ENCODE measurements at regions of chr12 and their contacts with region 1.

Region 1: GRCh38 chr12:121499929-121500793 is 80.7 kb downstream of the KDM2B start:
- DNase-seq: peak; percentile 75 to 85
- H3K4me3 ChIP-seq: peak overlapping the region; percentile 37 to 50
- H3K27ac ChIP-seq: peak overlapping the region; percentile 71 to 80
- H3K4me1 ChIP-seq: peaks cover 0 to 10% (median 0%) of the 10 kb centered on the region in 4 donors
- H3K27me3 ChIP-seq: no peaks in the 10 kb centered on the region
- CTCF ChIP-seq: peak; percentile 83 to 98

Region 2: DNA sequence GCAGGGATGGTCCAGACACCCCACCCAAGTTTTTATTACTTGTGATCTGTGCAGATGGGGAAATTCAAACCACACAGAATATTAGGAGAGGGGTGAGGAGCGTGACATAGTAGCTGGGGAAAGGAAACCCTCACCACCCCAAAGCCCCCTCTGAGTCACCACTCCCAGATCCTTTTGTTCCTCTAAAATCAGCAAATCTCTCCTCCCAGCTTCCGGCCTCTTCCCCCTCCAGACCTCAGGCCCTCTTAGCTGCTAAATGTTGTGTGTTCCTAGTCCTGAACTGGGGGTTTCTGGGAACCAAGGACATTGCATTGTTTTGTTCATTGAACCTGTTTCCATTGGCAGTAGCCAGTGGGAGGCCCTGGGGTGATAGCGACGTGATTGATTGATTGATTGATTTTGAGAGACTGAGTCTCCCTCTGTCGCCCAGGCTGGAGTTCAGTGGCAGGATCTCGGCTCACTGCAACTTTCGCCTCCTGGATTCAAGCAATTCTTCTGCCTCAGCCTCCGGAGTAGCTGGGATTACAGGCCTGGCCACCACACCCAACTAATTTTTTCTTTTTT is 120.2 kb after region 1 on chr12:
- intact Hi-C with region 1: no loop called
- DNase-seq: no peak
- H3K4me3 ChIP-seq: no peak overlapping the region
- H3K27ac ChIP-seq: no peak overlapping the region
- H3K4me1 ChIP-seq: peaks cover 0 to 6% (median 3%) of the 10 kb centered on the region in 4 donors
- H3K27me3 ChIP-seq: no peaks in the 10 kb centered on the region
- CTCF ChIP-seq: no peak

Region 3: GRCh38 chr12:121678716-121679580 is 178.8 kb after region 1 on chr12:
- intact Hi-C with region 1: loop called (anchors 2 kb)
- DNase-seq: no peak
- H3K4me3 ChIP-seq: no peak overlapping the region
- H3K27ac ChIP-seq: no peak overlapping the region
- H3K4me1 ChIP-seq: no peaks in the 10 kb centered on the region
- H3K27me3 ChIP-seq: no peaks in the 10 kb centered on the region
- CTCF ChIP-seq: no peak